ENCODE measurements at regions of chr5 and their contacts with region 1.

Region 1: DNA sequence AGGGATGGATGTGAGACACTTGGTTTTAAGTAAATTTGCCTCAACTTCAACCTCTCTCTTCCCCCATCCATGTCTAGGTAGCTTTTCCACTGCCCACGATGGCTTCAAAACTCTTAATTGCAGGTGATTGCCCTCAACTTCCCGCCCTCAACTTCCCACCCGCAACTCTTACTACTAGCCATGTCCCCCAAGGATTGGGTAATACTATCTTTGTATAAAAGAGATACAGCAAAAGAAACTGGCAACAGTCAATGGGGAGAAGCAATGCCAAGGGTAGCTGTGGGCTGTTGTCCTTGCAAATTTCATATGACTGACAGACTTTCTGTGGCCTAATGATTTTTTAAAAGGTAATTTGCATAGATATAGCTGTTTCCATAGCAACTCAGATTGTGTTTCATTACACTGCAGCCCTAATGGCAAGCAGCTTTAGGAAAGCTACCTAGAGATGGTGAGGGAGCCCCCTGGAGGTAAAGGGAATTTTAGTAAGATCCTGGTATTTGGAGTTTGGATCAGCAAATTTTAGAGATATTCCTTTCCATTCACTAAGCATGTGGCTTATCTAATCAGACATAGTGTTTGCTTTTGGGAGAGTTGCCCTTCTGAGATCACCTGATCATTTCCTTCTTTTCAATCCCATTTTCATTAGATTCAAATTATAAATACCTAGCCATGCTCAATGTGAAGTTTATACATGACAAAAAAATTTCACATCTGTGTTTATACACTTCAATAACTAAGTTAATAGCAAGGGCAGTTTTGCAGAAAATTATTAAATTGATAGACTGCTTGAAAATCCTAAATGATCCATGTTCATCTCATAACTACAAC is 421.6 kb upstream of the DAP start:
- H3K4me3 Mint-ChIP-seq: no peak overlapping the region
- H3K27ac Mint-ChIP-seq: no peak overlapping the region
- H3K4me1 Mint-ChIP-seq: no peaks in the 10 kb centered on the region
- H3K27me3 Mint-ChIP-seq: no peaks in the 10 kb centered on the region

Region 2: DNA sequence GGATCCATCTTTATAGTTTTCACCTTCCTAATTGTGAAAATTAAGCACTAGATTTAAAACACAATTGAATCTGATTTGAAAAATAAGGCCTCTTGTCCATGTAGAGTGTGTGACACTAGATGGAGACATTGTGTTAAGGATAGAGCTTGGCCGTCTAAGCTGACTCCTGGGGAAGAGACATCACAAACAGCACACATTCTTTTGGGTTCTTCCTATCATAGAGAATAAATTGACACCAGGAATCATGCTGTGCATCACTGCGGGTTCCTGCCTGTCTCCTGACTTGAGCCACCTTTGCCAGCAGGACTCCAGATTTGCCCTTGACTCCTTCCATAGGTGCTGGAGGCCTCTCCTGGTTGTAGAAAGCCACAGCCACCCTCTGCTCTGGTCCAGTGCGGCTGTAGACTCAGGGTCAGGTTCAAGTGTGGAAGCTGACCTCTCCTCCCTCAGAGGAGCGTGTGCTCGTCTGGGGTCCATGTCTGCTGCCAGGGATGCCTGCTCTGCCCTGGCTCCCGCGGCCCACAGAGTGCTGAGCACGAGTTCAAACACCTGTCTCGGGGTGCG is 729.8 kb before region 1 on chr5:
- intact Hi-C with region 1: loop called (anchors 10 kb)
- H3K4me3 Mint-ChIP-seq: no peak overlapping the region
- H3K27ac Mint-ChIP-seq: no peak overlapping the region
- H3K4me1 Mint-ChIP-seq: peaks cover 46% of the 10 kb centered on the region
- H3K27me3 Mint-ChIP-seq: peaks cover 23% of the 10 kb centered on the region

Region 3: GRCh38 chr5:10695055-10695649 is 487.5 kb before region 1 on chr5:
- intact Hi-C with region 1: loop called (anchors 2 kb)
- H3K4me3 Mint-ChIP-seq: no peak overlapping the region
- H3K27ac Mint-ChIP-seq: peak overlapping the region; percentile 60
- H3K4me1 Mint-ChIP-seq: peaks cover 40% of the 10 kb centered on the region
- H3K27me3 Mint-ChIP-seq: no peaks in the 10 kb centered on the region

Region 4: DNA sequence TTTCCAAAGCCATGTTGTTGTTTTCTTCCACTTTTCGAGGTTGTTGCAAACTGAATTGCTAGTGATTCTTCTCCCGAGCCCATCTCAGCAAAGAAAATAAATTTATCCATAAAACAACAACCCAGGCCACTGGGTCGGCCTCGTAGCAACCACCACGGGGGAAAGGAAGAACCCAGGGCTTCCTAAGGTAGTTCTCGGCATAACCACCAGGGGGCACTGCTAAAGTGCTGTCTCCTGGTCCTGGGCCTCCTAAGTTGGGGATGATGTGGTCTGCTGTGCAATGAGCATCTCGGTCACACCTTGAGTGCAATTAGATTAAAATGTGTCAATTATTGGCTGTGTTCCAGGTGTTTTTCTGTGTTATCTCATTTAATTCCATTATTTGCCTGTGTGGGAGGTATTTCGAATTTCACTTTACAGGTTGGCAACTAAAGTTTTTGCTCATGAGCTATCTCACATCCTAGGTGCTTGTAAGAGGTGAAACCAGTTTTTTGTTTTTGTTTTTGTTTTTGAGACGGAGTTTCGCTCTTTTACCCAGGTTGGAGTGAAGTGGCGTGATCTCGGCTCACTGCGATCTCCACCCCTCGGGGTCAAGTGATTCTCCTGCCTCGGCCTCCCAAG is 318.8 kb before region 1 on chr5:
- intact Hi-C with region 1: loop called (anchors 2 kb)
- H3K4me3 Mint-ChIP-seq: no peak overlapping the region
- H3K27ac Mint-ChIP-seq: no peak overlapping the region
- H3K4me1 Mint-ChIP-seq: peaks cover 6% of the 10 kb centered on the region
- H3K27me3 Mint-ChIP-seq: peaks cover 7% of the 10 kb centered on the region

Region 5: GRCh38 chr5:10987930-10988504 is 194.6 kb before region 1 on chr5:
- intact Hi-C with region 1: loop called (anchors 1 kb)
- H3K4me3 Mint-ChIP-seq: no peak overlapping the region
- H3K27ac Mint-ChIP-seq: no peak overlapping the region
- H3K4me1 Mint-ChIP-seq: peaks cover 9% of the 10 kb centered on the region
- H3K27me3 Mint-ChIP-seq: peaks cover 25% of the 10 kb centered on the region